HEK293 (cell line): ENCODE measurements at regions of chr1 and their contacts with region 1.

Region 1: DNA sequence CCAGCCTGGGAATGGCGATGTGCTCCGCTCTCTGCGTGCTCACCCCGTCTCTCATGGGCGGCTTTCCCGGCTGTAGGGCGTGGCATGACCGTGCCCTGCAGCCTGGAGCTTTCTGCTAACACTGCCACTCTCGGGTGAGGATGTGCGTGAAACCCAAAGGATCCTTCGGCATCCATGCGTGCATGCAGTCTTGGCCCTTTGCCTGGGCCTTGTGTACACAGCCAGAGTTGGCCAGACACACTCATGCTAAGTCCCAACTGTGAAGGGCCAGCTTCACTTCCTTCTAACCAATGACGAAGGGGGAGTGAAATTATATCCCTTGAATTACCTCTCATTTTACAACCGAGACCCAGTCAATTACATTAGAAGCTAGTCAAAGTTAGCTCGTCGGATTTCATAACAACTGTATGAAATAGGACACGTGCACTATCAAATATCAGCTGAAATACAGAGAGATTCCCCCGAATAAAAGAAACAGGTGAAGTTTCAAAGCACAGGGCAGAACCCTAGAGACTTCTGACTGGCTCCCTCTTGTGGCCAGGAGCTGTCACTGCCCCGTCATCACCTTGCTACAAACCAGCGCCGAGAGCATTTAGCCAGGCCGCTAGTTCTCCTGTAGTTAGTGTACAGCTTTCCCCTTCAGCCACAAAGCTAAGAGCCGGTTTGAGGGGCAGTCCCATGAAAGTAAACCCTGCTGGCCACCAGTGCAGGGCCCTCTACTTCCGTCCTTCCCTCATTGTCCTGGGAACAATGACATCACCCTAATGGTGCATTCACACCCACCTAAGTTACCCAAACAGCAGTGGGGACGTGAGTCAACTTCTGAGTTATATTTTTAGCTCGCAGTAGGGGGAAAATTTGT is 63.4 kb upstream of the COA6 start:
- H3K4me3 ChIP-seq: no peak overlapping the region
- H3K27ac ChIP-seq: no peak overlapping the region
- H3K4me1 ChIP-seq: no peaks in the 10 kb centered on the region
- CTCF ChIP-seq: peak; percentile 86

Region 2: GRCh38 chr1:234125283-234125682 is 184.5 kb before region 1 on chr1:
- CTCF ChIA-PET with region 1: interaction called, 99 read pairs
- POLR2A ChIA-PET with region 1: interaction called, 4 read pairs
- H3K4me3 ChIP-seq: no peak overlapping the region
- H3K27ac ChIP-seq: no peak overlapping the region
- H3K4me1 ChIP-seq: no peaks in the 10 kb centered on the region
- CTCF ChIP-seq: peak; percentile 85

Region 3: DNA sequence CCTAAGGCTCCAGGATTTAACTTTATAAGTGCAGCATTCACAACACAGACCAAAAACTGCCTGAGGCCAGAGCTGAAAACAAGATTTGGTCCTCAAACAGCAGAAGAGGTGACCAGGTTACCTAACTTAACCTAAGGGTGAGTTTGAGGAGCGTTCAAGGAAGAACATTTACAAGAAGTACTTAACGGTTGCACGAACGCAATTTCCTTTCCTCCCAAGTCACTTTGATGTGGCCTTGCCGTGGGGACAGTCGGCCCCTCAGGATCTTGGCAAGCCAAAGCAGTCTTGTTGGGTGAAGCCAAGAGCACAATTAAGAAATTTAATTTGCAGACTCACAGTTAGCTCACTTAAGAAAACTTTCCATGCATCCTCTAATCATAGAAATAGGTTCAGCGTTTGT is 139.2 kb before region 1 on chr1:
- CTCF ChIA-PET with region 1: interaction called, 13 read pairs
- POLR2A ChIA-PET with region 1: no interaction called
- H3K4me3 ChIP-seq: no peak overlapping the region
- H3K27ac ChIP-seq: no peak overlapping the region
- H3K4me1 ChIP-seq: no peaks in the 10 kb centered on the region
- CTCF ChIP-seq: no peak

Region 4: GRCh38 chr1:234222561-234223280 is 87.1 kb before region 1 on chr1:
- CTCF ChIA-PET with region 1: interaction called, 15 read pairs
- POLR2A ChIA-PET with region 1: no interaction called
- H3K4me3 ChIP-seq: no peak overlapping the region
- H3K27ac ChIP-seq: no peak overlapping the region
- H3K4me1 ChIP-seq: no peaks in the 10 kb centered on the region
- CTCF ChIP-seq: no peak

Region 5: GRCh38 chr1:234288946-234289345 is 20.9 kb before region 1 on chr1:
- CTCF ChIA-PET with region 1: interaction called, 40 read pairs
- POLR2A ChIA-PET with region 1: no interaction called
- H3K4me3 ChIP-seq: no peak overlapping the region
- H3K27ac ChIP-seq: no peak overlapping the region
- H3K4me1 ChIP-seq: no peaks in the 10 kb centered on the region
- CTCF ChIP-seq: no peak

Region 6: DNA sequence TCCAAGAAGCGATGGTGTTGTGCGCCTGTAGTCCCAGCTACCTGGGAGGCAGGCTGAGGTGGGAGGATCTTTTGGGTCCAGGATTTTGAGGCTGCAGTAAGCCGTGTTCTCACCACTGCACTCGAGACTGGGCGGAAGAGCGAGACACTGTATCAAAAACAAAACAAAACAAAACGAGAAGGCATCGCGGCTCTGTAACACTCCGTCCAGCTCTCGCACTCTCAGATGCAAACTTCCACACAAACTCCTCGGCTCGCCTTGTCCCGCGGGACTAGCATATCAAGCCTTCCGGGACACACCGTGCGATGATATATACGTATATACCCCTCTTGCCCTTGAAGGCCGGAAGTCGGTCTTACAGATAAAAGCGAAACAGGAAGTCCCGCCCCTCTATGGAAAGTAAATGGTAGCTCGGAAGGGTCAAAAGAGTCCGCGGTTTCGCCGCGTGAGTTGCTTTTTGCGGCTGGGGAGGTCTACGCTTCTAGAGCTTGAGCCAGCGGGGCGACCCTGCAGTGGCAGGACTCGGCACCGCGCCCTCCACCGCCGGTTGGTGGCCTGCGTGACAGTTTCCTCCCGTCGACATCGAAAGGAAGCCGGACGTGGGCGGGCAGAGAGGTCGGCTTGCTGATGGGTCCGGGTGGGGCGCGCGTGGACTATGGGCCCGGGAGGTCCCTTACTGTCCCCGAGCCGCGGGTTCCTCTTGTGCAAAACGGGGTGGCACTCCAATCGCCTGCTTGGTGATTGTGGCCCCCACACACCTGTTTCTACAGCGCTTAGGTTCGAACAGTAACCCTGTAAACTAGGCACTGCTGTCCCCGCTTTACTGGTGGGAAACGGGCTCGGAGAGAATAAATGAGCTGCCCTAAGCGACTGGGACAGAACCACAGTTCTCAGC is 63.5 kb after region 1 on chr1 and contains the start of gene COA6:
- CTCF ChIA-PET with region 1: interaction called, 13 read pairs
- POLR2A ChIA-PET with region 1: no interaction called
- H3K4me3 ChIP-seq: peak within 1 kb of the TSS; percentile 95
- H3K27ac ChIP-seq: peak within 1 kb of the TSS; percentile 85
- H3K4me1 ChIP-seq: no peaks in the 10 kb centered on the region
- CTCF ChIP-seq: peak; percentile 89

Region 7: DNA sequence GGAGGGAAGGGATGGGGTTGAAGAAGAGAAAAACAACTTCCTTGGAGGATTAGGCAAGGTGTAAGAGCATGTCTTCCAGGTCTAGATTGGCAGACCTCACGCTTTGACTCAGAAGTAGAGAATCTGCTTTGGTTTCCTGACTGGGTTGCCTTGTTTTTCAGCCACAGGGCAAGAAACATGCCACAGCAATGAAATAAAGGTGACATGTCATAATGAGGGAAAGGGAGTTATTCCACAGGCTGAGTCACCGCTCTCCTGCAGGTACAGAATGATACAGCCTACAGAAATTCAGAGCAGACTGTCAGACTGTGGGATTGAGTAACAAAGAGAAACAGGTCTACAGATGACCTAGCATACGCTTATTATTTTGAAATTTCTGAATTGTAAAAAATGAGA is 254.8 kb after region 1 on chr1:
- CTCF ChIA-PET with region 1: no interaction called
- POLR2A ChIA-PET with region 1: no interaction called
- H3K4me3 ChIP-seq: no peak overlapping the region
- H3K27ac ChIP-seq: no peak overlapping the region
- H3K4me1 ChIP-seq: peaks cover 14% of the 10 kb centered on the region
- CTCF ChIP-seq: no peak

Region 8: GRCh38 chr1:234743791-234744611 is 434.2 kb after region 1 on chr1:
- CTCF ChIA-PET with region 1: no interaction called
- POLR2A ChIA-PET with region 1: no interaction called
- H3K4me3 ChIP-seq: no peak overlapping the region
- H3K27ac ChIP-seq: peak overlapping the region; percentile 5; the same call in 1 of the 2 replicates
- H3K4me1 ChIP-seq: peaks cover 33% of the 10 kb centered on the region
- CTCF ChIP-seq: no peak; the same call in 1 of the 2 replicates